GM10248 (cell line): ENCODE measurements at regions of chr14 and their contacts with region 1.

Region 1: DNA sequence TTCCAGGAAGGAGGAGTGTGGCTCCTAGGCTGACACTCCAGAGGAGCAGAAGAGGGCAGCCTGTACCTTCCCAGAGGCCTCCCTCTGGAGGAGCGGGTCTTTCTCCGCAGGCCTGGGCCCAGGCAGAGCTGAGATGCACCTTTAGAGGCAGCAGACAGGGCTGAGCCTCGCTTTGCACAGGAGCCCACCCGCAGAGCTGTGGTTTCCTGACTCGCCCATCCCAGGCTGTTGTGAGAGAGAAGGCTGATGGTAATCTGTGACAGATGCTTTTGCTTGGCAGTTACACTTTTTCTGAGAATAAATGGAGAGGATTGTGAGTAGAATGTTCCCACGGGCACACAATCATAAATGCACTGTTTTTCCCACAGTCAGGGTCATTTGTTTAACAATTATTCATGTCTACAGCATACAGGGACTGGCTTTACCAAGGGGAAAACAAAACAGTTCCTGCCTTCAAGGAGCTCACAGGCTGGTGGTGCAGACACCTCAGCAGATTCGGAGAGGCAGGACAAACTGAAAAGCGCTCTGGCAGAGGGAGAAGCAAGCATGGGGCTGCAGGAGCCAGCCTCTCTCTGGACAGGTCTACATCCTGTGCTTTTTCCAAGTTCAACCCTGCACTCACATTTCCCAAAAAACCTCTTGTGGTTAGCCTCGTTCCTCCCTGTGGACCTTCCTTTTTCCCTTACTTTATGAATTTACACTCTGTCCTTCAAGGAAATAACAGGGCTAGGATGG is 13.9 kb downstream of the EVL start:
- DNase-seq: peak; percentile 39
- CTCF ChIP-seq: peak; percentile 2

Region 2: DNA sequence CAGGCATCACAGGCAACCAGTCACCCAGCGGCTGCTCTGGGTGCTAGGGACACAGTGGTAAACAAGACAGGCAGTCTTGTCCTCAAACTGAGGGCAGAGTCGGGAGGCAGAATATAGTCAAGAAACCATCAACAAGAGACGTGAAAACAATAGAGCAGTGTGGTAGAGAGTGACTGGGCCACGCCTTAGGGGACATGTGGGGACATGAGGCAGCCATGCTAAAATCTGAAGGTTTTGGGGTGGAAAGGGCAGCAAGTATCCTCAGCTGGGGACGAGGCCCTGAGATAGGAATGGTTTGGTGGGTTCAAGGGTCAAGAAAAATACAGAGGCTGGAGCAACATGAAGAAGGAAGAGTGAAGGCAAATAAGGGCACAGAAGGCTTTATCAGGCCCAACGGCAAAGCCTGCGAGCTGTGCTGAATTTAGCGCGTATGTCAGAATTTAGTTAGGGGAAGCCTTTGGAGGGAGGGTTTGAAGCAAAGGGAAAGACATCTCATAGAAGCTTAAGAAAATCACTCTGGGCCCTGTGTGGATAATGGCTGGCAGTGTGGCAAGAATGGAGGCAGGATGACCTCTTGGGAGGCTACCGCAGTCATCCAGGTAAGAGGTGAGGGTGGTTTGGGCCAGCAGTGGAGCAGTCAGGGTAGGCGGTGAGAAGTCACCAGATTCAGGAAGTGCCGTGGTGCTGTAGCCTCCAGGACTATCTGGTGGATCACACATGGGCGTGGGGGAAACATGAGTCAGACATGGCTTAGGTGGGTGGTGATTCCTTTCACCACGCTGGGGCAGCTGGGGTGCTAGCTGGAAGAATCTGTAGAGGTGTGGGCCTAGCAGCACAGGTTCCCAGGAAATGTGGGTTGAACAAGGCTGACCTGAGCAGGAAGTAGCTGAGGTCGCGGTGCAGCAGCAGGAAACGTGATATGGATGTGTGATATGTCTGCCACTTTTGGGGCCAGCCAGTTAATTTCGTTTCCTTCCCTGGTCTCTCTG is 10.9 kb before region 1 on chr14:
- CTCF ChIA-PET with region 1: interaction called, 18 read pairs
- POLR2A ChIA-PET with region 1: interaction called, 3 read pairs
- DNase-seq: peak; percentile 32
- CTCF ChIP-seq: no peak

Region 3: DNA sequence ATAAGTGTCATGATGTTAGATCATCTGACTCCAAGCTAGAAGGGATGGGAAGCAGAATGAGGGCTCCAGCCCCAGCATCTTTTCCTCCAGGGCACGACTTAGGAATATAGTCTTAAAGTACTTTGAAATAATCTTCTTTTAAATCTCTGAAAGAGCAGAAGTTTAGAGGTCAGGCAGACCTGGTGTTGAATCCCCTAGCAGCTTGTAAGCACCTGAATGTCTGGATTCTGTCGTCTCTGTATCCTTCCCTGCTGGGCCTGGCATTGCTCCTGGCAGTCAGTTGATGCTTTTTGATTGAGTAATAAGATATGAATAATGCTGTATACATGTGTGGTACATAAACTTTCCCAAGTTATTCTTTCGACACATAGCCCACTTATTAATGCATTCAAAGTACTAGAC is 17.4 kb after region 1 on chr14:
- CTCF ChIA-PET with region 1: interaction called, 336 read pairs
- POLR2A ChIA-PET with region 1: no interaction called
- DNase-seq: no peak
- CTCF ChIP-seq: no peak